ENCODE measurements at regions of chr2 and their contacts with region 1.

Region 1: GRCh38 chr2:53028259-53028658 is 739.3 kb upstream of the CHAC2 start:
- DNase-seq: peak; percentile 22 to 41
- H3K4me3 ChIP-seq: no peak overlapping the region
- H3K27ac ChIP-seq: no peak overlapping the region
- H3K4me1 ChIP-seq: peaks cover 10% of the 10 kb centered on the region; the same call in 1 of the 2 replicates
- H3K27me3 ChIP-seq: no peaks in the 10 kb centered on the region
- CTCF ChIP-seq: no peak

Region 2: GRCh38 chr2:53087262-53087873 is 59.1 kb after region 1 on chr2:
- CTCF ChIA-PET with region 1: no interaction called
- POLR2A ChIA-PET with region 1: no interaction called
- intact Hi-C with region 1: loop called (anchors 5 kb)
- DNase-seq: peak in 1 of 2 experiments; percentile 52
- H3K4me3 ChIP-seq: no peak overlapping the region
- H3K27ac ChIP-seq: 0 out of 2 replicates have a peak overlapping the region, but pooled peaks have one; percentile 7
- H3K4me1 ChIP-seq: peaks cover 12% of the 10 kb centered on the region
- H3K27me3 ChIP-seq: no peaks in the 10 kb centered on the region
- CTCF ChIP-seq: no peak

Region 3: GRCh38 chr2:53129851-53130250 is 101.6 kb after region 1 on chr2:
- CTCF ChIA-PET with region 1: no interaction called
- POLR2A ChIA-PET with region 1: no interaction called
- intact Hi-C with region 1: loop called (anchors 2 kb)
- DNase-seq: peak; percentile 41 to 78
- H3K4me3 ChIP-seq: no peak overlapping the region
- H3K27ac ChIP-seq: peak overlapping the region; percentile 29; the same call in 1 of the 2 replicates
- H3K4me1 ChIP-seq: peaks cover 28% of the 10 kb centered on the region
- H3K27me3 ChIP-seq: no peaks in the 10 kb centered on the region
- CTCF ChIP-seq: no peak

Measured in PC-9 (cell line).